Calu3 (cell line): ENCODE measurements at regions of chr15 and their contacts with region 1.

Region 1: DNA sequence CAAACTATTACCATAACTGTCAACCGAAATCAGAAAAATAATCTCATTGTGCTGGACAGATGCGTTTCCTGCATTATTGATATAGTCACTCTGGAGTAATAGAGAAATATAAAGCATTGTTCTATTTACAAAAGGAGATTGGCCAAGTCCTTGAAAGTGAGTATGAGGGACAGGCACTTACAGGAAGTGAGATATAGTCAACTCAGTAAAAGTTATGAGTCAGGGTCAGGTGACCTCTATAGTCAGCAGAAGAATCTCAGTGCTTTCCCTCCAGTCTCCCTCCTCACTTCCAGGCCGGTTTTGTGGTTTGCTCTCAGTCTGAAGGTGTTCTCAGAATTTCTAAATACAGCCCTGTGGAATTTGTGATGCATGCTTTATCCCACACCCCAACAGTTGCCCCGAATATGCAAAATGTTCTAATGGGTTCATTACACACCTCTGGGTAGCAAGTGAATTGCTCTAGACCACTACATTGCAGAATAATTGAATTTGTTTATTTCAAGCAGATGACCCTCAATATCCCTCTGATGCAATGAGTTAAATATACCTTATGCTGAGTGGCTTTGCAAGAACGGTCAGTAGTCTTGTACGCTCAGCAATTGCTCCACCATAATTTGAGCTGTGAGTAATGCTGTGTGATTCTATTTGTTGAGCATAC is 787.7 kb downstream of the MCTP2 start:
- DNase-seq: peak; percentile 32
- H3K4me3 Mint-ChIP-seq: no peak overlapping the region
- H3K27ac Mint-ChIP-seq: no peak overlapping the region
- H3K4me1 Mint-ChIP-seq: peaks cover 23% of the 10 kb centered on the region
- H3K27me3 Mint-ChIP-seq: no peaks in the 10 kb centered on the region
- CTCF ChIP-seq: no peak

Region 2: DNA sequence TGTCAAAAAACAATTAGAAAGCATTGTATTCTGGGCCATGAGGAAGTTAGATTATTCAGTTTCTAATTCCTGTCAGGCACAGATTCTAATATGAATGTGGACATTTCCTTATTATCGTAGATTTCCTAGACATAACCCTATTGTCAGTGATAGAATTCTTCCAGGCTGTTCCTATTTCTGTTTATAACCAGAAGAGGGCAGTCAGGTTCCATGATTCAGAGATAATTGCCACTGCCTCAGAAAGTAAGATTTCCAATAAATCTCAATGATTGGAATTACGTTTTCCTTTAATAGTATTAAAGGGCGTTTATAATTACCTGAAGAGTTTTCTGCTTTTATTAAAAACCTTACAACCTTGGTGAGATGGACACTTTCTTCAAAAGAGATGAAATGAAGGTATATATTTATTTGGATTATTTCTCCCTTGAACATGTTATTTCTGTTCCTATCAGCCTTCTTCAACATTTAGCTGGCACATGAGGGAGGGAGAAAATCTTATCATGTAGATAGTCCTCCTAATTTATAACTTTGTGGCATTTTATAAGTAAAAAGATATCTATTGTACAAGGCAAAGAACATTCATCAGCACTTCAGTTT is 348.5 kb before region 1 on chr15:
- CTCF ChIA-PET with region 1: no interaction called
- intact Hi-C with region 1: loop called (anchors 2 kb)
- DNase-seq: no peak
- H3K4me3 Mint-ChIP-seq: no peak overlapping the region
- H3K27ac Mint-ChIP-seq: no peak overlapping the region
- H3K4me1 Mint-ChIP-seq: no peaks in the 10 kb centered on the region
- H3K27me3 Mint-ChIP-seq: peaks cover 17% of the 10 kb centered on the region
- CTCF ChIP-seq: peak; percentile 64